Keratinocyte (primary cell): ENCODE measurements at regions of chr3 and their contacts with region 1.

Region 1: DNA sequence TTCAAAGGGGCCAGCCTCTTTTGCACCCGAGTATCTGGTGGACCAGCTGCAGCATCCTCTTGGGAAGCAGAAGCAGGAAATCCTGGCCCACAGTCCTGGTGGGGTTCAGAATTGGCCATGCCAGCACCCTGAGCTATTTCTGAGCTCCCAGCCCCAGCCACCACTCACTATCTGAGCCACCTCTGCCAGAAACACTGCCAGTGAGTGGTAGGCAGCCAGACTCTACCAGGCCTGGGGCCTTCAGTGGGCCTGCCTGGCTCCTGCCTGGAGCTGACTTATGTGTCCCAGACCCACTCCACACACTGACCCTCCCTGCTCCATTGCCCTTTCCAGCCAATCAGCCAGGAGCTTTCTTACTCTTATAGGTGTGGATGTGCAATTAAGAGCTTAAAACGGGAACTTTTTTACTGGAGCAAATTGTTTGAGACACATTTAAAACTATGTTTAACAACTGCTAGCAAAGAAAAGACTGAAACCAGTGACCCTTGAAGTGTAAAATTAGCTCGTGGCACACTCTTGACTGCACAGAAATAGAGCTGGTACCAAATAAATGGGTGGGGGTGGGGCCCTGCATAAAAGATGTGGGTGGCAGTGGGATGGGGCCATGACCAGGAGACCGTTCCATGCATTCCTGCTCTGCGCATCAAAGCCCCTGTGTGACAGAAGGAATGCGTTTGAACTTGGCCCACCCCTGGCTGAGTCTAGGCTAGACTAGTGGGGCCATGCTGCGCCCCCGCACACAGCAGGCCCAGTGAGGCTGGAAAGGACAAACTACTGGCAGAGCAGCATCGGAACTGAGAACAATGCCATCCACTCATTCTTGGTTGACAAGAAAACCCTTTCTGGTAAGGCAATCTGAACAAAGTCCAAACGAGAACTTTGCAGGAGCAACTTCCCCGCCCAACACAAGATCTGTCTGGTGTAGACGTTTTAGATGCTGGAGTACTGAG is 48.0 kb downstream of the CTNNB1 start:
- DNase-seq: no peak
- H3K4me3 ChIP-seq: no peak overlapping the region
- H3K27ac ChIP-seq: no peak overlapping the region
- H3K4me1 ChIP-seq: no peaks in the 10 kb centered on the region
- H3K27me3 ChIP-seq: no peaks in the 10 kb centered on the region
- CTCF ChIP-seq: no peak

Region 2: DNA sequence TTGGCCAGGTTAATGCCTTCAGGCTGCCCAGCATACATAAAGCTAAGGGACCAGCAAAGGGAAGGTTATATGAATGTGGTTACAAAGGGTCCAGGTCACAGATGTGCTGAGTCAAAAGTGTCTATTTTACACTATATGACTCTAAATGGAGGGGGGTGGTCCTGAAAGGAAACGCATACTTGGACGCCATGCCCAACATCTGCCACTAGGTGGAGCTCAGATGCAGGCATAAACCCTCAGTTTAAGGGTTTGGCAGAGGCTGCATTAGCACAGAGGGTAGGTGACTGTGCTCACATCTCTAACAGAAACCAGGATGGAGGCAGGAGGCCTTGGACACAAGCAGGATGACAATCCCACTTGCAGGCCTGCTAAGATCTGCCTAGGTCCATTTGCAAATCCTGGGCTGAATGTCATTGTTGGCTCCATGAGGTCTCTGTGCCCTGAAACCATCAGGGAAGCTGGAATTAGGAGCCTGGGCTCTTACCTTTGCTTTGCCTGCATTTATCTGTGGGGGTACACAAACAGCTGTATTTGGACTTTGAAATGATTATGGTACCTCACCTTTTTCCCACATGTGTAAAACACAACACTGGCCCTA is 666.7 kb before region 1 on chr3:
- dilution Hi-C with region 1: loop called (anchors 25 kb)
- DNase-seq: peak; percentile 9
- H3K4me3 ChIP-seq: no peak overlapping the region
- H3K27ac ChIP-seq: no peak overlapping the region
- H3K4me1 ChIP-seq: no peaks in the 10 kb centered on the region
- H3K27me3 ChIP-seq: peaks cover 17% of the 10 kb centered on the region
- CTCF ChIP-seq: peak; percentile 94 to 99 (median 96)

Region 3: GRCh38 chr3:41304593-41304992 is 57.3 kb after region 1 on chr3:
- dilution Hi-C with region 1: no loop called
- DNase-seq: no peak
- H3K4me3 ChIP-seq: no peak overlapping the region
- H3K27ac ChIP-seq: no peak overlapping the region
- H3K4me1 ChIP-seq: peaks cover 2% of the 10 kb centered on the region
- H3K27me3 ChIP-seq: no peaks in the 10 kb centered on the region
- CTCF ChIP-seq: no peak